IMR-90 (cell line): ENCODE measurements at regions of chr5 and their contacts with region 1.

Region 1: DNA sequence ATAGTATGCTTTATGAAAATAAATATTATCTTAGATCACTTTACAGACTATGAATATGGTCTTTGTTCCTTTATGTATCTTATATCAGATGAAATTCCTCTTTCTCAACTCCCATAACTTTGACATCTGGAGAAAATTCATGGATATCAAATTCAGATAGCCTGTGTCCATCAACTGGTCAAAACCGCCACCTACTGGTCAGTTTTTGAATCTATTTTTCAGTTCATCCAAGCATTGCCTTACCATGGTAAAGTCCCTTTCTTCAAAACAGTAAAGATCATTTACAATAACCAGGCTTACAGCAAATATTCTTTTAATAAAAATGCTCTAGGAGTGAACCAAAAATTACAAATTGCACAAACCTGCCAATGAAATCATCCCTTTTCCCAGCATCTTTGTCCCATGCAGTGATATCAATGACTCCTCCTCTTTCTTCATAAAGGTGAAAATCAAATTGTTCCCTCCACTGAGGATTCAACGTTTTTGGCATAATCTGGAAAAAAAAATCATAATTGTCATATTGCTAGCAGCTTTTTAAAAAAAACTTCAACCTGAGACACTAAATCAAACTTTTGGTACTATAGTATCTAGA is 290.5 kb downstream of the SLF1 start:
- DNase-seq: peak; percentile 37
- ATAC-seq: peak; percentile 70
- H3K4me3 ChIP-seq: no peak overlapping the region
- H3K27ac ChIP-seq: no peak overlapping the region
- H3K4me1 ChIP-seq: no peaks in the 10 kb centered on the region
- H3K27me3 ChIP-seq: no peaks in the 10 kb centered on the region
- CTCF ChIP-seq: peak; percentile 62
- POLR2A ChIP-seq: no peak
- RAD21 ChIP-seq: peak; percentile 61

Region 2: DNA sequence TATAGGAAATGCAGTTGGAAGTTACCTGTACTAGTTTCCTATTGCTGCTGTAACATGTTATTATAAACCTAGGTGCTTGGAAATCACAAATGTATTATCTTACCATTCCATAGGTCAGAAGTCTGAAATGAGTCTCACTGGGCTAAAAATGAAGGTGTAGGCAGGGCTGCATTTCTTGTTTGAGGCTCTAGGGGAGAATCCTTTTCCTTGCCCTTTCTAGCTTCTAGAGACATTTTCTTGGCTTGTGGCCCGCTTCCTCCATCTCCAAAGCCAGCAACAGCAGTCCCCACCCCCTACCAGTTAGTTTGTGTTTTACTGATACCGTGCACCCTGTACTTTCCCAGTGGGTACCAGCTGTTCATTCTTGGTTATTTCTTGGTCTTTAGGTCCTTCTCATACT is 137.2 kb before region 1 on chr5:
- CTCF ChIA-PET with region 1: no interaction called
- POLR2A ChIA-PET with region 1: no interaction called
- dilution Hi-C with region 1: no loop called
- in situ Hi-C with region 1: no loop called
- intact Hi-C with region 1: no loop called
- DNase-seq: no peak
- ATAC-seq: no peak
- H3K4me3 ChIP-seq: no peak overlapping the region
- H3K27ac ChIP-seq: no peak overlapping the region
- H3K4me1 ChIP-seq: no peaks in the 10 kb centered on the region
- H3K27me3 ChIP-seq: no peaks in the 10 kb centered on the region
- CTCF ChIP-seq: no peak
- POLR2A ChIP-seq: no peak
- RAD21 ChIP-seq: no peak

Region 3: DNA sequence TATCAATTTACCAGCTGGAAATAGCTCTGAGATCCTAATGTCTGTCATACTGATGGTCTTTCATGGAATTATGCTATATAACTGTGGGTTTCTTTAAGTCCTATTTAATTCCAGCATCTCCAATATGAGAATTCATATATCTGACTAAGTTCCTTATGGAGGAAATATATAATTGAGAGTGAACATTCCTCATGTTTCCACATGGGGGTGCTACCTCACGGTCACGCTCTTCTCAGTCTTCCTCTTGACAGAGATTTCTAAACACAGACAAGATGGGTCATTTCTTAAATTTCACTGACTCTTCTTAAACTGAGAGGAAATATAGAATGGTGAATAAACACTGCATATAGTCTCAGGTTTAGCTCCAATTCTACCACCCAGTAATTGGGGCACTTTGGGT is 78.5 kb before region 1 on chr5:
- CTCF ChIA-PET with region 1: interaction called, 3 read pairs
- POLR2A ChIA-PET with region 1: no interaction called
- dilution Hi-C with region 1: no loop called
- in situ Hi-C with region 1: no loop called
- intact Hi-C with region 1: loop called (anchors 5 kb)
- DNase-seq: no peak
- ATAC-seq: no peak
- H3K4me3 ChIP-seq: no peak overlapping the region
- H3K27ac ChIP-seq: no peak overlapping the region
- H3K4me1 ChIP-seq: no peaks in the 10 kb centered on the region
- H3K27me3 ChIP-seq: no peaks in the 10 kb centered on the region; the same call in 1 of the 2 replicates
- CTCF ChIP-seq: 0 out of 2 replicates have a peak, but pooled peaks have one; percentile 11
- POLR2A ChIP-seq: no peak
- RAD21 ChIP-seq: no peak

Region 4: DNA sequence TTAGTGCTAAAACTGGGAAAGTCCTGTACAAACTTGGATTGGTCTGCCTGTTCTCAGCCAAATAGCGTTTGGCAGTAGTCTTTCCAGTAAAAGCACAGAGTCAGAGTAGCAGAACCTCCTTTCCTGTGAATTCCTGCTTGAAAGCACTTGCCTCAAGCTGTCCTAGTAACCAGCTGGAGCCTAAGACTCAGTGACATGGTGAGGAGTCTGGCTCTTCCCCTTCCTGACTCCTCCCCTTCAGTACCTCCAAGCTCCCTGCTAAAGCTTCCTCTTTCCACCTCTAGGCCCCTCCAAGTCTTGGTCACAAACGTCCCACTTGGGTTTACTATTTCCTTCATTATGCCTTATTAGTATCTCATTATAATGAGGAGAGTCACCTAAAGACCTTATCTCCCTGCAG is 460.8 kb after region 1 on chr5:
- CTCF ChIA-PET with region 1: no interaction called
- POLR2A ChIA-PET with region 1: no interaction called
- dilution Hi-C with region 1: no loop called
- in situ Hi-C with region 1: no loop called
- intact Hi-C with region 1: no loop called
- DNase-seq: no peak
- ATAC-seq: no peak
- H3K4me3 ChIP-seq: no peak overlapping the region
- H3K27ac ChIP-seq: no peak overlapping the region
- H3K4me1 ChIP-seq: no peaks in the 10 kb centered on the region
- H3K27me3 ChIP-seq: 0 out of 2 replicates have a peak, but pooled peaks cover 2% of the 10 kb centered on the region
- CTCF ChIP-seq: no peak
- POLR2A ChIP-seq: no peak
- RAD21 ChIP-seq: no peak